CD4-positive, alpha-beta T cell (primary cell): ENCODE measurements at regions of chr19 and their contacts with region 1.

Region 1: GRCh38 chr19:47256688-47257443 is 541 bp downstream of the CCDC9 start:
- DNase-seq: peak; percentile 96 to 100 (median 98)
- ATAC-seq: peak; percentile 77
- H3K4me3 ChIP-seq: peak overlapping the region; percentile 72
- H3K4me3 Mint-ChIP-seq: peak overlapping the region; percentile 84
- H3K27ac ChIP-seq: peak overlapping the region; percentile 69 to 91
- H3K27ac Mint-ChIP-seq: peak overlapping the region; percentile 97
- H3K4me1 ChIP-seq: peaks cover 30% of the 10 kb centered on the region
- H3K4me1 Mint-ChIP-seq: peaks cover 39% of the 10 kb centered on the region
- H3K27me3 ChIP-seq: no peaks in the 10 kb centered on the region
- H3K27me3 Mint-ChIP-seq: no peaks in the 10 kb centered on the region
- CTCF ChIP-seq: no peak

Region 2: GRCh38 chr19:46788262-46788967 is 468.5 kb before region 1 on chr19 and contains the start of gene SLC1A5:
- CTCF ChIA-PET with region 1: no interaction called
- POLR2A ChIA-PET with region 1: no interaction called
- intact Hi-C with region 1: loop called in 1 of 2 experiments (anchors 10 kb)
- DNase-seq: peak; percentile 90 to 99 (median 94)
- ATAC-seq: peak; percentile 80
- H3K4me3 ChIP-seq: peak within 1 kb of the TSS; percentile 76
- H3K4me3 Mint-ChIP-seq: peak within 1 kb of the TSS; percentile 93
- H3K27ac ChIP-seq: peak within 1 kb of the TSS; percentile 44 to 72
- H3K27ac Mint-ChIP-seq: peak within 1 kb of the TSS; percentile 86
- H3K4me1 ChIP-seq: peaks cover 71% of the 10 kb centered on the region
- H3K4me1 Mint-ChIP-seq: peaks cover 62% of the 10 kb centered on the region
- H3K27me3 ChIP-seq: no peaks in the 10 kb centered on the region
- H3K27me3 Mint-ChIP-seq: no peaks in the 10 kb centered on the region
- CTCF ChIP-seq: no peak
- total RNA-seq, gene SLC1A5: 7.1 TPM

Region 3: DNA sequence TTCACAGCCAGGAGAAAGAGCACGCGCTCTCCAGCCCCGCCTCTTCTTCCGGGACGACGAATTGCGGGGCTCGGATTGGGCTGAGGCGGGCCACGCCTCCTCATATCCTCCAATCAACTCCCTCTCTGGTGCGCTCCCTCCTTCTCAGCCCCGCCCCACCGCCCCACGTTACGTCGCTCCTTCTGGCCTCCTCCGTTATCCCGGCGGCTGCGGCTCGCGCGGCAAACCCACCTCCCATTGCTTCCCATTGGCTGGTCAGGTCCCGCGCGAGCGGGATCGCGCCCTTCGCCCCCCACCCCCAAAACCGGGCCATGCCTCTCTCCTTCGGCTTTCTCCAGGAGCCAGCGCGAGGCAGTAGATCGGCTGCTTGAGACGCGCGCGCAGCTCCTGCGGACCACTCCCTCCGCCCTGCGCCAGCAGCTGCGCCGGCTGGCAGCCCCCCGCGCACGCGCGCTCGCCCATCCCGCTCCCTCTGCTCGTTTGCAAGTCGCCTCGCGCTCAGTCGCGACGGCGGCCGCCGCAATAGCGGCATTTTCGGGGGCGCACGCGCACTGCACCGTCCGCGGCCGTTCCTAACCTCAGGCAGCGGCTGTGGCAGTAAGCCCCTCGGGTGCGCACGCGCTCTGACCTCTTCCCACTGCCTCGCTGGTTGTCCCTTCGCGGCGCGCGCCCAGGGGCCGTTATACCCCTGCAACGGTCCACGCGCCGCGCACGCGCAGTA is 396.6 kb before region 1 on chr19:
- CTCF ChIA-PET with region 1: no interaction called
- POLR2A ChIA-PET with region 1: no interaction called
- intact Hi-C with region 1: loop called (anchors 5 to 10 kb)
- DNase-seq: peak; percentile 86 to 98 (median 92)
- ATAC-seq: peak; percentile 77
- H3K4me3 ChIP-seq: peak overlapping the region; percentile 62
- H3K4me3 Mint-ChIP-seq: peak overlapping the region; percentile 95
- H3K27ac ChIP-seq: peak overlapping the region; percentile 77 to 91
- H3K27ac Mint-ChIP-seq: peak overlapping the region; percentile 84
- H3K4me1 ChIP-seq: peaks cover 49% of the 10 kb centered on the region
- H3K4me1 Mint-ChIP-seq: peaks cover 16% of the 10 kb centered on the region
- H3K27me3 ChIP-seq: no peaks in the 10 kb centered on the region
- H3K27me3 Mint-ChIP-seq: no peaks in the 10 kb centered on the region
- CTCF ChIP-seq: no peak

Region 4: DNA sequence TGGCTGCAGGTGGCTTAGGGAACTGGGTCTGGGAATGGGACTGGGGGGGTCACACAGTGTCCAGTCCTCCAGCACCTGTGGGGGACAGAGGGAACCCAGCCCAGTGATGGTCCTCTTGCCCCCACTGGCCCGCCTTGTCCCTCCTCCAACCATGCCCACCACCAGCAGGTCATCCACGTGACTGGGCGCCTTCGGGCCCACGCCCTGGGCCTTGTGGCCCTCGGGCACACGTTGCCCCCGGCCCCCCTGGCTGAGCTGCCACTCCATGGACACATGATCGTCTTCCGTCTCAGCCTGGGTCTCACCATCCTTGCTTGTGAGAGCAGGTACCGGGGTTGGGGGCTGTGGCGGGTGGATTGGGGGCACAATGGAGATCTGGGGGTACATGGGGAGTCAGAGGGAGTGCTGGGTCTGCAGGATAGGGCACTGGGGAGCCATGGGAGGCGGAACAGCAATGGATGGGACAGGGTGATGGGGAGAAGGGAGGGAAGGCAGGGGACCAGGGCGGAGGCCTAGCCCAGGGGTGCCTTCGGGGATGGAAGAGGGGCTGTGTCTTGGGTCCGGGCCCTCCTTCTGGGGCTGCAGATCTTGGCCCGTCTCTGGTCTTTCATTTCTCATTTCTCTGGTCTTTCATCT is 217.5 kb before region 1 on chr19:
- CTCF ChIA-PET with region 1: no interaction called
- POLR2A ChIA-PET with region 1: no interaction called
- intact Hi-C with region 1: no loop called
- DNase-seq: no peak
- ATAC-seq: no peak
- H3K4me3 ChIP-seq: no peak overlapping the region
- H3K4me3 Mint-ChIP-seq: no peak overlapping the region
- H3K27ac ChIP-seq: no peak overlapping the region
- H3K27ac Mint-ChIP-seq: no peak overlapping the region
- H3K4me1 ChIP-seq: peaks cover 20% of the 10 kb centered on the region
- H3K4me1 Mint-ChIP-seq: peaks cover 15% of the 10 kb centered on the region
- H3K27me3 ChIP-seq: no peaks in the 10 kb centered on the region
- H3K27me3 Mint-ChIP-seq: peaks cover 10% of the 10 kb centered on the region
- CTCF ChIP-seq: no peak

Region 5: DNA sequence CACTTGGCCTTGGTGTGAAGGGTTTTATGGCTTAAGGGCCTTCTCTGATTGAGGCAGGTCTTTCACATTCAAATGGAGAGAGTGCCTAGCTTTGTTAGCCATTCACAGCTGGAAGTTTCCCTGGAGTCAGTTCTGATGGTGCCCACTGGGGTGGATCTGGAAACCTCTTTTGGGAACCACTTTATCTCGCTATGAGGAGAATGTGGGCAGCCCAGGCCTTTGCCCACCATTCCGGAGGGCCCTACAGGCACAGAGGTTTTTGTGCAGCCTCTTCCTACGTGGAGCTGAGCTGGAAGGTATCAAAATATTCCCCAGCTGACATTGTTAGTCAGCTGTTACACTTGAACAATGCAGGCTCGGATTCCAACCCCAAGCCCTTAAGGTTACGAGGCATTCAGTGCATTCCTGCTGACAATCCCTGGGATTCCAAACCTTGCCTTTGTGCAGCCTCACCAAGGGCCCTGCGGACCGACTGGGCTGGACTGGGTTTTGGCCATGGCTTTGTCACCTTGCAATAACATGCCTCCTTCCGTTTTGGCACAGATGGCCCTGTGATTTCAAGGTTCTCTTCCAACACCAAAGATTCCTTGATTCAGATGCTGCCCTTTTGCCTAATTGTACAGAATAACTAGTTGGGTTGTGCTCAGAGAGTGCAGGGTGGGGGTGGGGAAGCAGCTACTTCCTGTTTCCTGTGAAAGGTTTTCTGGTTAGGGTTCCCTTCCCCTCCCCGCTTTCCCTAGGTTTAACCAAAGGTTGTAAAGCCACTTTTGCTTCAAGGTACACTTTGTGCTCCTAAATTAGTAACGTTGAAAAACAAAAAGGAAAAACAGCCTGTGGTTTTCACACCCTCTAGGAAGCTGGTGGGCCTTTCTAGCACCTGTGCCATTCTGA is 99.2 kb before region 1 on chr19:
- CTCF ChIA-PET with region 1: no interaction called
- POLR2A ChIA-PET with region 1: interaction called, 11 read pairs
- intact Hi-C with region 1: no loop called
- DNase-seq: peak in 12 of 14 experiments; percentile 21 to 84 (median 42)
- ATAC-seq: peak; percentile 15
- H3K4me3 ChIP-seq: peak overlapping the region; percentile 31
- H3K4me3 Mint-ChIP-seq: peak overlapping the region; percentile 81
- H3K27ac ChIP-seq: peak overlapping the region; percentile 42 to 64
- H3K27ac Mint-ChIP-seq: peak overlapping the region; percentile 85
- H3K4me1 ChIP-seq: peaks cover 73% of the 10 kb centered on the region
- H3K4me1 Mint-ChIP-seq: peaks cover 71% of the 10 kb centered on the region
- H3K27me3 ChIP-seq: no peaks in the 10 kb centered on the region
- H3K27me3 Mint-ChIP-seq: no peaks in the 10 kb centered on the region
- CTCF ChIP-seq: no peak

Region 6: GRCh38 chr19:47210689-47211316 is 46.1 kb before region 1 on chr19:
- CTCF ChIA-PET with region 1: interaction called, 6 read pairs
- POLR2A ChIA-PET with region 1: interaction called, 14 read pairs
- intact Hi-C with region 1: no loop called
- DNase-seq: peak; percentile 59 to 91 (median 80)
- ATAC-seq: peak; percentile 97
- H3K4me3 ChIP-seq: no peak overlapping the region
- H3K4me3 Mint-ChIP-seq: no peak overlapping the region
- H3K27ac ChIP-seq: no peak overlapping the region
- H3K27ac Mint-ChIP-seq: peak overlapping the region; percentile 4
- H3K4me1 ChIP-seq: peaks cover 10% of the 10 kb centered on the region
- H3K4me1 Mint-ChIP-seq: peaks cover 13% of the 10 kb centered on the region
- H3K27me3 ChIP-seq: no peaks in the 10 kb centered on the region
- H3K27me3 Mint-ChIP-seq: no peaks in the 10 kb centered on the region
- CTCF ChIP-seq: peak; percentile 90

Region 7: DNA sequence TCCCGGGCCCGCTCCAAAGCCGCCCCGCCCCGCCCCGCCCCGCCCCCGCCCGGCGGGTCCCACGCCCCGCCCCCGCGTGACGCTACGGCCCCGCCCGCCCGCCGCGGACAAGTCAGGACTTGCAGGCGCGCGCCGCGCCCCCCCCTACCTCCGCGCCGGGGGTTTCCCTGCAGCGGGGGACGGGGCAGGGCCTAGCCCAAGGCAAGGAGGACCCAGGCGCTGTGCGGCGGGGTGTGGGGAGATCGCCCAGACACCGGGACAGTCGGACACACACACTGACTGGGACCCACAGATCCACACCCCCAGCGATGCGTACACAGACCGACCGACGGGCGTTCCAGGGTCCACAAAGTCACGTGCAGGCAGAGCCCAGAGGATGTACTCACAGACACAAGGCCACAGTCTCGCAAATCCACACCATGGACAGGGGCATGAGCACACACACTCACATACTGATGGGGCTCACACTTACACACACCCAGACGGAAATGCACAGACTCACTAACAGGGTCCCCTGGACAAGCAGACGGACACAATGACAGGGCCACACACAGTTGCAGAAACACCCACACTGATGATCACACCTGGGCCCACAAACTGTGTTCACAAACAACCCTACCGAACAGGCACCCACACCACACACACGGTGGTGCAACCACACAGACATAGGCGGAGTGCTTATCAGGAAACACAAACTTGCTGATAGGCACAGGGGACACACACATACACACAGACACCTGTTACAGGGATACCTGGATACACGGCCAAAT is 25.5 kb before region 1 on chr19:
- CTCF ChIA-PET with region 1: no interaction called
- POLR2A ChIA-PET with region 1: interaction called, 32 read pairs
- intact Hi-C with region 1: loop called in 1 of 2 experiments (anchors 1 kb)
- DNase-seq: peak; percentile 77 to 96 (median 90)
- ATAC-seq: peak; percentile 56
- H3K4me3 ChIP-seq: peak overlapping the region; percentile 62
- H3K4me3 Mint-ChIP-seq: peak overlapping the region; percentile 85
- H3K27ac ChIP-seq: peak overlapping the region in 1 of 2 donors; percentile 55
- H3K27ac Mint-ChIP-seq: peak overlapping the region; percentile 72
- H3K4me1 ChIP-seq: peaks cover 55% of the 10 kb centered on the region
- H3K4me1 Mint-ChIP-seq: peaks cover 28% of the 10 kb centered on the region
- H3K27me3 ChIP-seq: no peaks in the 10 kb centered on the region
- H3K27me3 Mint-ChIP-seq: no peaks in the 10 kb centered on the region
- CTCF ChIP-seq: no peak

Region 8: DNA sequence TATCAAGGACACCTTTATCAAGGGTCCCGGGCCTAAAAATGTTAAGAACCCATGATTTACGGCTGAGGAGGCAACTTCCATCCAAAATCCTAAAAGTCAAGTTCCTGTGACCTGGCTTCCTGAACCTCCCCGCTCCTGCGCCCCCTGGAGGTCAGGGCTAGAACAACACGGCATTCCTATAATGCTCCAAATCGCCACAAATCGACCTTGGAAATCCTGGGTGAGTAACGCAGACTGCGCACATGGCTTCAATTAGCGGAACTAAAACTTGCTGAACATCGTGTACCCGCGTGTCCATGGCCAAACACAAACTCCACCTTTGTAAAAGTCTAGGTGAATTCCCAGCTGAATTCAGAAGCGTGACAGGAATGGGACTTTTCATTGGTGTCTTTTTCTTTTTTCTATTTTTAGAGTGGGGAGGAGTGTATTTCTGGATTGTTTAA is 48.5 kb after region 1 on chr19:
- CTCF ChIA-PET with region 1: no interaction called
- POLR2A ChIA-PET with region 1: no interaction called
- intact Hi-C with region 1: no loop called
- DNase-seq: peak; percentile 25 to 78 (median 46)
- ATAC-seq: peak; percentile 57
- H3K4me3 ChIP-seq: no peak overlapping the region
- H3K4me3 Mint-ChIP-seq: no peak overlapping the region
- H3K27ac ChIP-seq: no peak overlapping the region
- H3K27ac Mint-ChIP-seq: no peak overlapping the region
- H3K4me1 ChIP-seq: peaks cover 7% of the 10 kb centered on the region
- H3K4me1 Mint-ChIP-seq: peaks cover 5% of the 10 kb centered on the region
- H3K27me3 ChIP-seq: no peaks in the 10 kb centered on the region
- H3K27me3 Mint-ChIP-seq: peaks cover 18% of the 10 kb centered on the region
- CTCF ChIP-seq: peak; percentile 98

Region 9: DNA sequence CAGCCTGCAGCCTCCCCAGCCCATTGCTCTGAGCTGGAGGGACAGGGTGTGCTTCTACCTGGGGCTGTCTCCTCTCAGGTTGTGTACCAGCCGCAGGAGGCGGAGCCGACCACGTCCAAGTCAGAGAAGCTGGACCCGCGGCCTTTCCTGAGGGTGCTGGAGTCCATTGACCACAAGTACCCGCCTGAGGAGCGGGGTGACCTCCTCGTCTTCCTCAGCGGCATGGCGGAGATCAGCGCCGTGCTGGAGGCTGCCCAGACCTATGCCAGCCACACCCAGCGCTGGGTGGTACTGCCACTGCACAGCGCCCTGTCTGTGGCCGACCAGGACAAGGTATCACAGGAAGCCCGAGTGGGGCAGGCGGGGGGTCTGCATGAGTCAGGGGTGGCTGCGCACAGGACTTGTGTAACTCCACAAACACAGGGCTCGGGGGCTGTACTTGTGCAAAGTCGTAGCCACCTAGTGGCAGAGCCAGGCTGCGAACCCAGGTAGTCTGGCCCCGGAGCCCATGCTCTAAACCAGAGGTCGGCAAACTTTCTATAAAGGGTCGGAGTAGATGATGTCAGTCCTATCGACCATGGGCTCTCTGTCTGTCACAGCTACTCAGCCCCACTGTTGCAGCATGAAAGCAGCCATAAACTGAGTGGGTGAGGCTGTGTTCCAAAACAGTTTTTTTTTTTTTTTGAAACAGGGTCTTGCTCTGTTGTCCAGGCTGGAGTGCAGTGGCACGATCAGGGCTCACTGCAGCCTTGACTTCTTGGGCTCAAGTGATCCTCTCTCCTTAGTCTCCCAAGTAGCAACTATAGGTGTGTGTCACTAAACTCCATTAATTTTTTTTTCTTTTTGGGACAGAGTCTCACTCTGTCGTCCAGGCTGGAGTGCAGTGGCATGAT is 101.2 kb after region 1 on chr19:
- CTCF ChIA-PET with region 1: no interaction called
- POLR2A ChIA-PET with region 1: no interaction called
- intact Hi-C with region 1: no loop called
- DNase-seq: peak in 1 of 14 experiments; percentile 30
- ATAC-seq: no peak
- H3K4me3 ChIP-seq: no peak overlapping the region
- H3K4me3 Mint-ChIP-seq: no peak overlapping the region
- H3K27ac ChIP-seq: no peak overlapping the region
- H3K27ac Mint-ChIP-seq: no peak overlapping the region
- H3K4me1 ChIP-seq: peaks cover 5% of the 10 kb centered on the region
- H3K4me1 Mint-ChIP-seq: peaks cover 6% of the 10 kb centered on the region
- H3K27me3 ChIP-seq: no peaks in the 10 kb centered on the region
- H3K27me3 Mint-ChIP-seq: no peaks in the 10 kb centered on the region
- CTCF ChIP-seq: no peak

Region 10: DNA sequence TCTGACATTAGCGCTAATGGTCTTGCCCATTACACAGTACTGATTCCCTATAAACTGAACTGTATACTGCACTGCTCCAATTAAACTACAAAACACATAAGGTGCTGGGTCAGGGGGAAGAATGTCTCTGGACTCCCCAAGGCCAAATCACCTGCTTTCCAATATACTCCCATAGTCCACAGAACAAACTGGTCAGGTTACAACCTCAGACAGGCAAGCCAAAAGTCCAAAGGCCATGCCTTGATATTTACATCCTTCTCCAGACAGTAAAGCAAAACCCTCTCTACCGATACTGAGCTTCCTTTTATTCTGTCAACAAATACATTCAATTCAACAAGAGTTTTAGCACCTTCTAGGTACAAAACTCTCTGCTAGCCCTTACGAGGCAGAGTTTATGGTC is 307.2 kb after region 1 on chr19:
- CTCF ChIA-PET with region 1: no interaction called
- POLR2A ChIA-PET with region 1: no interaction called
- intact Hi-C with region 1: no loop called
- DNase-seq: no peak
- ATAC-seq: no peak
- H3K4me3 ChIP-seq: no peak overlapping the region
- H3K4me3 Mint-ChIP-seq: no peak overlapping the region
- H3K27ac ChIP-seq: no peak overlapping the region
- H3K27ac Mint-ChIP-seq: no peak overlapping the region
- H3K4me1 ChIP-seq: no peaks in the 10 kb centered on the region
- H3K4me1 Mint-ChIP-seq: no peaks in the 10 kb centered on the region
- H3K27me3 ChIP-seq: no peaks in the 10 kb centered on the region
- H3K27me3 Mint-ChIP-seq: no peaks in the 10 kb centered on the region
- CTCF ChIP-seq: no peak